Common myeloid progenitor, CD34-positive (primary cell): ENCODE measurements at regions of chr11 and their contacts with region 1.

Region 1: DNA sequence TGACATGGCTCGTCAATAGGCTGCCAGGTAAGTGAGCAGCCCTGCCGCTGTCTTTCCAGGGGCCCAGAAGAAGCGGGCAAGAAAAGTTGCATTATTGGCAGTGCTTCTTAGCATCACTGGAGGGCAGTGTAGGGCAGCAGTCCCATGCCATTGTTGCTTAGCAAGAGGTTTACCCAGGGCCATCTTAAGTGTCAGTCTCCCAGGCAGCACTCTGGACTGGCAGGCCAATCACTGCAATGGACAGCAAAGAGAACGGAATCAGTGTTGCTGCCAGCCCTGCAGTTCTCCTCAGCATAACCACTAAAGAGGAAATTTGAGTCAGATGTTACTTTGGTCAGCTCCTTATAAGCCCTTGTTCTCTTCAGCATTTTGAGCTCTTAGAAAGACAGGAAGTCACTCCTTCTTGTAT is 13.4 kb upstream of the GRK2 start:
- DNase-seq: peak; percentile 71 to 88 (median 87)
- H3K4me3 ChIP-seq: no peak overlapping the region
- H3K27ac ChIP-seq: no peak overlapping the region
- H3K4me1 ChIP-seq: peaks cover 0 to 8% (median 3%) of the 10 kb centered on the region in 4 experiments
- H3K27me3 ChIP-seq: no peaks in the 10 kb centered on the region

Region 2: GRCh38 chr11:67202045-67202444 is 50.8 kb before region 1 on chr11:
- CTCF ChIA-PET with region 1: no interaction called
- POLR2A ChIA-PET with region 1: no interaction called
- DNase-seq: no peak
- H3K4me3 ChIP-seq: no peak overlapping the region
- H3K27ac ChIP-seq: no peak overlapping the region
- H3K4me1 ChIP-seq: no peaks in the 10 kb centered on the region
- H3K27me3 ChIP-seq: no peaks in the 10 kb centered on the region

Region 3: DNA sequence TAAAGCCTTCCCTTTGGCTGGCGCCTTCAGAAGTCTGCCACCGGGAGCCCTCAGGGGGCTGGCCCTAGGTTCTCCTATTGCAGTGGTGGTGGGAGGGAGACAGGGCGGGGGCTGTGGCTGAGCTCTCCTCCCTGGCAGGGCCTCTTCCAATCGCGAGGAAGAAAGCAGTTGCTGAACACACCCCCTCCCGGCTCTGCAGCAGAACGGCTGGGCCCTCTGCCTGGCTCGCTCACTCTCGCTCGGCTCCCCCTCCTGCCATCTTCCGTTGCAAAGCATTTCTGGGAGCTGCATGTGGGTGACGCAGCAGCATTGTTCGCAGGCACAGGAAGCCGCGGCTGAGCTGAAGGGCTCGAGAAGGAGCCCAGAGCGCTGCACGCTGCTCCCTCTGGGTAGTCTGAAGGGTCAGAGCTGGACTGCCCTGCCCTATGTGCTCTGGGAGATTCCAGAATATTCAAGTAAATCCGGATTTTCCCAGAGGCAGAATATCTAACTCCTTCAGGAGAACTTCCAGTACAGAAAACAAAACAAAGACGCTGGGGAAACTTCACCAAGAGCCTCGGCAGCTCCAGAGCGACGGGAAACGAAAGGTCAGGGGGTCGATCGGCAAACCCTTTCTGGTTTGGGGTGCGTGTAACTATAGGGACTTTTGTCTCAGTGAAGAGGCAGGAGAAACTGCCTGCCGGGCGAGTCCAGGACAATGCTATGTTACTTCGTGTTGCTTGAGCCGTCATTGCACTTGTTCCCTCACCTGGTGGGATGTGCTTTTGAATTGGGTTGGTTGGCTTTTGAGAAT is 12.9 kb before region 1 on chr11:
- CTCF ChIA-PET with region 1: interaction called, 13 read pairs
- POLR2A ChIA-PET with region 1: interaction called, 17 read pairs
- DNase-seq: peak; percentile 99 to 100 (median 99)
- H3K4me3 ChIP-seq: peak overlapping the region; percentile 42 to 99 (median 97)
- H3K27ac ChIP-seq: peak overlapping the region; percentile 99
- H3K4me1 ChIP-seq: peaks cover 14 to 43% (median 39%) of the 10 kb centered on the region in 4 experiments
- H3K27me3 ChIP-seq: no peaks in the 10 kb centered on the region

Region 4: GRCh38 chr11:67295846-67296245 is 43.0 kb after region 1 on chr11:
- CTCF ChIA-PET with region 1: no interaction called
- POLR2A ChIA-PET with region 1: no interaction called
- DNase-seq: peak in 2 of 3 donors; percentile 59 to 66
- H3K4me3 ChIP-seq: no peak overlapping the region
- H3K27ac ChIP-seq: no peak overlapping the region
- H3K4me1 ChIP-seq: peaks cover 0 to 15% (median 4%) of the 10 kb centered on the region in 4 experiments
- H3K27me3 ChIP-seq: no peaks in the 10 kb centered on the region

Region 5: DNA sequence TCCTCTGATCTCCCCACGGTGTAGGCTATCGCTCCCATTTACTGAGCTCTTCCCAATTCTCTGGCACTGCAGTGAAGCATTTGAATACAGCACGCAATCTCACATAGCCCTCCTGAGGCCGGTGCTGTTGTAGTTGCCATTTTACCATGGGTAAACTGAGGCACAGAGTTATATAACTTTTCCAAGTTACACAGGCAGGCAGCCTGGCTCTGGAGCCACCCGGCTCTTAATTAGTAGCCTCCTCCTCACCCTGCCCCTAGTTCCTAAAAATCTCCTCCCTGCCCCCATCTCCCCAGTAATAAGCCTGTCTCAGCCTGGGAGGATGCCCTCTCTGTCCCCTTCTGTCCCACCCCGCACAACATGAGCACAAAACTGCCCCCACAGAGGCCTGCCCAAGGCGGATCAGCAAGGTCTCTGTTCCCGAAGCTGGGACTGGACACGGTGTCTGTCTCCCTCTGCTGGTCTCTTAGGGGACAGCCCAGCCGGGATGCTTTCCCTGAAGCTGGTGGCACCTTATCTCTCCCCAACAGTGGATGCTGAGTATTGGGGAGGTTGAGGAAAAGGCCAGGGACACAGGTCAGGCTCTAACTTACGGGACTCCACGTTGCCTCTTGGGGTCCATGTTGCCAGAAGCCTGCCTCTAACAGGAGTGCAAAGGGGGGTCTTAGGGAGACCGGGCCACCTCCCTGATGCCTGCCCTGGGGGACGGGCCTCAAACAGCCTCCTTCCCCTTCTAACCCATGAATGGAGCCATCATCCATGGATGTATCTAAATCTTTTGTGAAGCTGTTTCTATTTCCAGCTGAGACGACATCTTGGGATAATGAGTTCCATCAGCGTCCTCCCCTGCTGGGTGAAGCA is 129.7 kb after region 1 on chr11:
- CTCF ChIA-PET with region 1: interaction called, 14 read pairs
- POLR2A ChIA-PET with region 1: no interaction called
- DNase-seq: peak; percentile 70 to 82 (median 73)
- H3K4me3 ChIP-seq: no peak overlapping the region
- H3K27ac ChIP-seq: no peak overlapping the region
- H3K4me1 ChIP-seq: peaks cover 0 to 46% (median 29%) of the 10 kb centered on the region in 4 experiments
- H3K27me3 ChIP-seq: no peaks in the 10 kb centered on the region